Activated CD4-positive, alpha-beta T cell treated with anti-CD3 and anti-CD28 coated beads, Interleukin-2, amount 10 ng/mL, durations not matched to agents 24 days and 14 days (primary cell): ENCODE measurements at regions of chr12 and their contacts with region 1.

Region 1: GRCh38 chr12:70733385-70733784 is 96.2 kb upstream of the PTPRB start:
- DNase-seq: peak; percentile 72
- H3K4me3 Mint-ChIP-seq: no peak overlapping the region
- H3K27ac Mint-ChIP-seq: no peak overlapping the region
- H3K4me1 Mint-ChIP-seq: no peaks in the 10 kb centered on the region
- H3K27me3 Mint-ChIP-seq: no peaks in the 10 kb centered on the region

Region 2: DNA sequence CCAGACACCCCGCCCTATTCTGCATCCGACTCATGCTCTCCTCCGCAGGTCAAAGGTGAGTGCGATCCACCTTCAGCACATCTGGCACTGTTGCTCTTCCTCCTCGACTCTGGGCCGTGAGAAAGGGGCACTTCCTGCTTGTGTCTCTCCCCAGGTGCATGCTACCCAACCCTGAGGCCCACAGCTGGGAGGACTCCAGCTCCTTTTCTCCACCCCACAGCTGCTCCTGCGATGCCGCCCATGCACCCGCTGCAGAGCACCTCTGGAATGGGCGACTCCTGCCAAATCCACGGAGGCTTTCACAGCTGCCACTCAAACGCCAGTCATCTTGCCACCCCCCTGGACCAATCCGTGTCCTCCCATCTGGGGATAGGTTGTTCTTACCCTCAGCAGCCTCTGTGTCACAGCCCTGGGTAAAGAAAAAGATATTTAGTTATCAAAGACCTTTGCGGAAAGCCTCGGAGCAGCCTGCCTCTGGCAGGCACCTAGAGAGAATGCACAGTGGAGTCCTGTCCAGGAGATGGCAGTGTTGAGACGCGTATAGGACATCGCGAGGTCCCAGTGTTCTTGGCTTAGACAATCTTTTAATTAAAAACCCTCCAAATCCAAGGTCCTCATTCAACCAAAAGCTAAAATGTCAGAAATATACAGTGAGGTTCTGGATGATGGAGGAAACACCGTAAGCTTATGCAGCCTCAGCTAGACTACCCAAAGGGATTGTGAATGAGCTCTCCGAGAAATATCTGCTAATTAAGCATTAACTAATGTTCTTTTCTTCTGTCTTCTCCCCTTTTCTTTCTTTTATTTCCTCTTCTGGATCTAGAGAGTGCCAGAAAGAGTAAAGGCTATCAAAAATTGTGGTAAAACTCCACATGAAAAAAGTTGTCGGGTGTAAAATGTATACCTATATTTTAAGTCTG is 854.1 kb before region 1 on chr12:
- intact Hi-C with region 1: loop called (anchors 2 kb)
- DNase-seq: peak; percentile 87
- H3K4me3 Mint-ChIP-seq: no peak overlapping the region
- H3K27ac Mint-ChIP-seq: no peak overlapping the region
- H3K4me1 Mint-ChIP-seq: peaks cover 5% of the 10 kb centered on the region
- H3K27me3 Mint-ChIP-seq: peaks cover 16% of the 10 kb centered on the region